MCF 10A (cell line): ENCODE measurements at regions of chr7 and their contacts with region 1.

Region 1: DNA sequence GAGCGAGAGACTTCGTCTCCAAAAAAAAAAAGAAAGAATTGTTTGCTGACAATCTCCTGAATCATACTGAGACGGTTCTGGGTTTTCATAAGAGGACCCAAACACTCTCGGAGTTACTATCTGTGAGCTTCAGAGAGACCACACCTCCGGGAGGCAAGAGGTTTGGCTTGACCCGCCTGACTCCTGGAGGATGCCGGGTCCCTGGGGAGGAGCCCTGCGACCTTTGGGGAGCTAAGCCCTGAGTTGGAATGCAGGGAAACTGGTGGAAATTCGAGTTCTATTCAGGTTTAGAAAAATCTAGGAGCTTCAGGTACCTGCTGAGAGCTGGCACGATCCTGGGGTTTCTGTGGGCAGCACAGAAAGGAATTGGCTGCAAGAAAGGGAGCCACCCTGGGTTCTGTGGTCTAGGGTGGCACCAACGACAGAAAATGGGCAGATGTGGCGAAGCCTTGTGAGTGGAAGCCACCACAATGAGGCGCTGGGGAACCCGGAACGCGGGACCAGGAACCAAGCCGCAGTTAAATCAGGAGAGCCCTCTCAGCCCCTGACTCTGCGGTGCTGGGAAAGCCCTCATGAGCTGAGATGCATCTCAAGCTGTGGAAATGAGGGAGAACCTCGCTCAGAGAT is 21.8 kb upstream of the GATAD1 start:
- DNase-seq: no peak
- H3K4me3 Mint-ChIP-seq: no peak overlapping the region
- H3K27ac Mint-ChIP-seq: no peak overlapping the region
- H3K4me1 Mint-ChIP-seq: peaks cover 5% of the 10 kb centered on the region
- H3K27me3 Mint-ChIP-seq: no peaks in the 10 kb centered on the region
- CTCF ChIP-seq: no peak

Region 2: DNA sequence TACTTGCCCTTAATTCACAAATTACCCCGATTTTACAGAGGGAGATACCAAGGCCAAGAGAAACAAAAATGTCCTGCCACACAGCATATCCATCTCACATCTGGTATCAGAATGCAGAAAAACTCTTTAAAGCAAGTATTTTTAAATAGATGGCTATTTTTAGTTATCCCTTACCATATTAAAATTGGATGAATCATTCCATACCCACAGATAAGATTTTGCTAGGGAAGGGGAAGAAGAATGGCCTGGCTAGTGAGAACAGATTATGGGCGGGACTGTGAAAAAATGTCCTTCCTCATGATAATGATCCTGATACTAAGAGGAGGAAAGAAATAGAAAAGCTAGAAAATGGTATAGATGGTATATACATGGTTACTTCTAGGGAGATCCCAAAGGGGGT is 58.7 kb before region 1 on chr7:
- CTCF ChIA-PET with region 1: no interaction called
- POLR2A ChIA-PET with region 1: no interaction called
- intact Hi-C with region 1: no loop called
- DNase-seq: no peak
- H3K4me3 Mint-ChIP-seq: no peak overlapping the region
- H3K27ac Mint-ChIP-seq: no peak overlapping the region
- H3K4me1 Mint-ChIP-seq: peaks cover 9% of the 10 kb centered on the region
- H3K27me3 Mint-ChIP-seq: no peaks in the 10 kb centered on the region
- CTCF ChIP-seq: no peak

Region 3: DNA sequence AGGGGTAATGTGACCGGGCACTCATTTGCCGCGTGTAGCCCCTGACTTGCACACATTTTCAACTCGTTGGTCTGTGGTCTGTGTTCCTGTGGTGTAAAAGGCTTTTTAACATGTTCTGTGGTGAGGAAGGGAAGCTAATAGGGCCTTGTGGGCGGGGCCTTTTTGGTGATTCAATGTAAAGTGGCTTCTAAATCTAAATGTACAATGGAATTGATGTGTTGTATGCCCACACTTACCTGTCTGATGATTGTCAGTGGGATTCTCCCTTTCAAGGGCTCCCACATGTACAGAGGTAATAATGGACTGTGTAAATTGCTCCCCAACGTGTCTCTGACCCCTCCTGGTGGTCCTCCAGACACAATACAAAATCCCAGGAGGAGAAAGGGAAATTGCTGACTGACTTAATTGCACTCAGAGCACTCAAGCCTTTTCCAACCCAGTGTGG is 21.2 kb before region 1 on chr7:
- CTCF ChIA-PET with region 1: interaction called, 10 read pairs
- POLR2A ChIA-PET with region 1: no interaction called
- intact Hi-C with region 1: no loop called
- DNase-seq: no peak
- H3K4me3 Mint-ChIP-seq: no peak overlapping the region
- H3K27ac Mint-ChIP-seq: no peak overlapping the region
- H3K4me1 Mint-ChIP-seq: no peaks in the 10 kb centered on the region
- H3K27me3 Mint-ChIP-seq: no peaks in the 10 kb centered on the region
- CTCF ChIP-seq: no peak

Region 4: GRCh38 chr7:92415225-92415624 is 10.2 kb before region 1 on chr7:
- CTCF ChIA-PET with region 1: interaction called, 52 read pairs
- POLR2A ChIA-PET with region 1: interaction called, 4 read pairs
- intact Hi-C with region 1: no loop called
- DNase-seq: no peak
- H3K4me3 Mint-ChIP-seq: no peak overlapping the region
- H3K27ac Mint-ChIP-seq: no peak overlapping the region
- H3K4me1 Mint-ChIP-seq: no peaks in the 10 kb centered on the region
- H3K27me3 Mint-ChIP-seq: no peaks in the 10 kb centered on the region
- CTCF ChIP-seq: no peak

Region 5: DNA sequence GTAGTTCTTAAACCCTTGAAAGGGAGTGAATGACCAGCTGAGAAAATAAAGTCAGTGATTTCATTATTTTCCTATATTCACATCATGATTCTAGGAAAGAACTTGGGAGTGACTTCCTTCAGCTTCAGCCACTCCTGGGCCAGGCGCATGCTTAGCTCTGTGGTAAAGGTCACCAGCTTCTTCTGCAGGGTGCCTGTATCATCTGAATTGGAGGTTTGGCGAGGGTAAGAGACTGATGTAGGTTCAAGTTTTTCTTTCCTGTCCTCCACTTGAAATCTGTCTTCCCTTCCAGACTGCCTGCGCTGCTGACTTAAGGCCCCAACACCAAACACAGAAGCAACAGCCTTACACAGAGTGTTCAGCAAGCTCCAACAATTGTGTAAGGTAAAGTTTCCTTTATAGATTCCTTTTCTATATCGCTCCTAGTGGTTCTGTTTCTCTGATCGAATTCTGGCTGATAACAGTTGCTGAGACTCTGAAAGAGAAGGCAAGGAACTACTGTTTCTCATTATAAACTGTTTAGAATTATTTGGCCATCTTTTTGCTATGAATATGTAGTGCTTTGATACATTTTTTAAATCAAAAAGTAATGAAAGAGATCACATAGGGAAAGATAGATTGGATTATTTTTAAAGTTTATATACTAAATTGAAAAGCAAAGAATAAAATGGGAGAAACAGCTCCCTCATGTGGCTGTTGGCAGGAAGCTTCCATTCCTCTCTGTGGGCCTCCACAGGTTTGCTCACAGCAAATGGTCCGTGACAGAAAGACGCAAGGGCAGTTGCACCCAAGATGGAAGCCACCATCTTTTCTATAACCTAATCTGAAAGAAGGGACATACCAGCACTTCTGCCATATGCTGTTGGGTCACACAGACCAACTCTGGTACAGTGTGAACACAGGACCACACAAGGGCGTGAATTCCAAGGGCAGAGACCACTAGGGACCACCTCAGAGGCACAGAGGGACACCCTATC is 35.9 kb after region 1 on chr7:
- CTCF ChIA-PET with region 1: interaction called, 16 read pairs
- POLR2A ChIA-PET with region 1: interaction called, 3 read pairs
- intact Hi-C with region 1: no loop called
- DNase-seq: peak; percentile 49
- H3K4me3 Mint-ChIP-seq: no peak overlapping the region
- H3K27ac Mint-ChIP-seq: no peak overlapping the region
- H3K4me1 Mint-ChIP-seq: peaks cover 11% of the 10 kb centered on the region
- H3K27me3 Mint-ChIP-seq: no peaks in the 10 kb centered on the region
- CTCF ChIP-seq: peak; percentile 62